Gastrocnemius medialis (tissue), 4 donors: ENCODE measurements at regions of chr7 and their contacts with region 1.

Region 1: GRCh38 chr7:65872776-65873581 is at the start of gene VKORC1L1:
- DNase-seq: peak; percentile 89 to 95
- ATAC-seq: peak; percentile 88 to 92
- H3K4me3 ChIP-seq: peak within 1 kb of the TSS; percentile 83 to 100 (median 96)
- H3K27ac ChIP-seq: peak within 1 kb of the TSS; percentile 84 to 93 (median 89)
- H3K4me1 ChIP-seq: no peaks in the 10 kb centered on the region
- H3K27me3 ChIP-seq: no peaks in the 10 kb centered on the region
- CTCF ChIP-seq: no peak
- POLR2A ChIP-seq: peak; percentile 66 to 67
- total RNA-seq, gene VKORC1L1: 11.5 to 17.5 (median 14.9) TPM

Region 2: DNA sequence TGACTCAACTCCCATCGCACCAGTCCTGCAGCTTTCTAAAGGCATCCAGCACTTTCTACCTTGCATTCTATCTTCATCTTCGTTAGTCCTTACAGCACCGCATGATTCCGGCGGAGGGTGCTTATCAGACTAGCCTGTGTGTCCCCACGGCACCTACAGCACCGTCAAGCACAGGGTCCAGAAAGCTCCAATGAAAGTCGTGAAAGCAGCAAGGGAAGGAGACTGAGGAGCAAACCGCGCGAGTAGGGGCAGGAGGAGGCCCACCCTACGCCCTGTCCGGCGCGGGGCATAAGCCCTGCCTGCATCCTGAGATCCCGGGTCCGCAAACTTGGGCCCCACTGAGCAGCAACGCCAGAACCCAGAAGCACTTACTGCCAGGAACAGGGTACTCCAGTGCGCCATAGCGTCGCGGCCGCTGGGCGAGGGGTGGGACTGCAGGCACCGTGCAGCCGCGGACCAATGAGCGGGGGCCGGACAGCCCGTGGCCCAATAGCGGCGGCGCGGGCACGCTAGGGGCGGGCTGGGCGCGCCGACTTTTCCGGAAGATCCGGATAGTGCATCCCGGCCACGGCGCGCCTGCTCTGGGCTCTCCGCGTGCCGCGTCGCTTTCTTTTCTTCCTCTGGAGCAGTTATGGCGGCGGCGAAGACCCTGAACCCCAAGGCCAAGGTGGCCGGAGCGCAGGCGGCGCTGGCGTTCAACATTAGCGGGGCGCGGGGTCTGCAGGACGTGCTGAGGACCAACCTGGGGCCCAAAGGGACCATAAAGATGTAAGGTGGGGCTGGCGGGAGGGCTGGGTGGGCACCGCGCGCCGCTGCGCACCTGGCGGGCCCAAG is 122.3 kb before region 1 on chr7:
- in situ Hi-C with region 1: no loop called
- intact Hi-C with region 1: loop called (anchors 2 kb)
- DNase-seq: peak; percentile 78 to 81
- ATAC-seq: peak; percentile 93 to 95
- H3K4me3 ChIP-seq: peak overlapping the region; percentile 94 to 98 (median 96)
- H3K27ac ChIP-seq: peak overlapping the region; percentile 80 to 86 (median 82)
- H3K4me1 ChIP-seq: peaks cover 12 to 13% of the 10 kb centered on the region in 2 donors
- H3K27me3 ChIP-seq: no peaks in the 10 kb centered on the region
- CTCF ChIP-seq: peak in 3 of 5 experiments; percentile 27 to 42 (median 39)
- POLR2A ChIP-seq: peak; percentile 31 to 52

Region 3: DNA sequence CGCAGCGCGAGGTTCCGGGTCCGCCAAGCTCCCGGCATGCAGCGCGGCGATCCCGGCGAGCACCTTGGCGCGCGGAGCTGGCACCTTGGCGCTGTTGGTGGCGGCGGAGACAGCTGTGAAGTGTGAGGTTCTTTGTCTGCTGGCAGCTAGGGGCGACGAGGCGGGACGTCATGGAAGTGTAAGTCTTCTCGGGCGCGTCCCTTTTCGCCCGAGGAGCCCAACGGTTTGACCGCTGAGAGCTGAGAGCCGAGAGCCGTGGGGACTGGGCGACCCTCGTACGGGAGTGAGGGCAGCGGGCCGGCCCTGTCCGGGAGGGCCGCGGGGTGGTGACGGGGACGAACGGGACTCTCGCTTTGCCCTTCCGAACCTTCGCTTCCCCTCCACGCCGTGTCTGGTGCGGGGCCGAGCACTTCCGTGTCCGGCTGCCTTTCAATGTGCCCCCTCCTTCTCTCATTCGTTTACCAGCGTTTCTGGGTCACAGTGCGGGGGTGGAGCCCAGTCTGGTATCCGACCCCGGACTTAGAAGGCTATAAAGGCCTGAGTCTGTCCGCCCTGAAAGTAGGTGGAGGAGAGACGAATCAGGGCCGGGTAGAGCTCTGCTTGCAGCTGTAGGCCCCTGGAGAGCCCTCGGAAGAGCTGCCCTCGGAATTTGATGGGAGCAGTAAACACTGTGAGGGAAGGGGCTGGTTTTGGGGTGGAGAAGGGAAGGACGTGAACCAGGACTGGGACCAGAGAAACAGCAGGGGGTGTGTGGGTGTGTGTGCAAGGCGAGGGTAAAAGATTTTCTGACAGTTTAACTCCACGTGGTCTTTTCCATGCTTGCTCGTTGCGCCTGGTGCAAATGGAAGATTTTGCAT is 242.0 kb after region 1 on chr7 and contains the start of gene CRCP:
- in situ Hi-C with region 1: no loop called
- intact Hi-C with region 1: loop called (anchors 10 kb)
- DNase-seq: peak; percentile 68 to 78
- ATAC-seq: peak; percentile 91 to 94
- H3K4me3 ChIP-seq: peak within 1 kb of the TSS; percentile 89 to 98 (median 95)
- H3K27ac ChIP-seq: peak within 1 kb of the TSS; percentile 96 to 99 (median 98)
- H3K4me1 ChIP-seq: peaks cover 27 to 45% of the 10 kb centered on the region in 2 donors
- H3K27me3 ChIP-seq: no peaks in the 10 kb centered on the region
- CTCF ChIP-seq: peak in 2 of 5 experiments; percentile 11 to 18
- POLR2A ChIP-seq: peak; percentile 43 to 69
- total RNA-seq, gene CRCP: 19.2 to 21.3 (median 20.4) TPM